ENCODE measurements at regions of chr9 and their contacts with region 1.

Region 1: DNA sequence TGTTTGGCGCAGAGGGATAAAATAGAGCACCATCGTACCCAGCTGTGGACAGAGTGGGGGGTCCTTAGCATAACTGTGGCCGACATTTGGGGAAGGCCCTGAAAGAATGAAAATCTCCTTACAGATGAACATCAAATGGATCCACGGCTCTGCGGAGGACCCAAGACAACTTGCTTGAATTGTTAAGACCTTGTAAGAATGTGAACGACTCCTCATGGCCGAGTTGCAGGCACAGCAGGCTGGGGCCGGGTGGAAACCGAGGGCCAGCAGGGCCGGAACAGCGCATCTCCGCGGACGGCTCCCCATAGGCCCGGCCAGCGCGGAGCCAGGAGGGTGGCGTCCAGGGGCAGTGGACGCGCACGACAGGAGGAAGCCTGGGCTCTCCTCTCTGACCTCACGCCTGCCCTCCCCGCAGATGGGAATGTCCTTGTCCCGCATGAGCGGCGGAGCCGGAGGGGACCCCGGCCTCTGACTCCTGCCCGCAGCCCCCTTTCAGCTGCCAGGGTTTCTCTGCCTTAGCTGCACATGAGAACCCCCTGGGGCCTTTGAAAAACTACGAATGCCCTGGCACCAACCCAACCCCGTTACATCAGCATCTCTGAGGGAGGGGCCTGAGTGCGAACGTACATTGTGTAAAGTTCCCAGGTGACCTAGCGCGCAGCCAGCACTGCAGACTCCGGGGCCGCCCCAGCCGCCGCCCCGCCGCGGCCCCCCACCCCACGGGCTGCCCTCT is 36.2 kb upstream of the PTCH1 start:
- DNase-seq: no peak
- H3K4me3 ChIP-seq: no peak overlapping the region
- H3K27ac ChIP-seq: no peak overlapping the region
- H3K4me1 ChIP-seq: no peaks in the 10 kb centered on the region
- H3K27me3 ChIP-seq: no peaks in the 10 kb centered on the region
- CTCF ChIP-seq: no peak
- EP300 ChIP-seq: no peak
- POLR2A ChIP-seq: no peak

Region 2: DNA sequence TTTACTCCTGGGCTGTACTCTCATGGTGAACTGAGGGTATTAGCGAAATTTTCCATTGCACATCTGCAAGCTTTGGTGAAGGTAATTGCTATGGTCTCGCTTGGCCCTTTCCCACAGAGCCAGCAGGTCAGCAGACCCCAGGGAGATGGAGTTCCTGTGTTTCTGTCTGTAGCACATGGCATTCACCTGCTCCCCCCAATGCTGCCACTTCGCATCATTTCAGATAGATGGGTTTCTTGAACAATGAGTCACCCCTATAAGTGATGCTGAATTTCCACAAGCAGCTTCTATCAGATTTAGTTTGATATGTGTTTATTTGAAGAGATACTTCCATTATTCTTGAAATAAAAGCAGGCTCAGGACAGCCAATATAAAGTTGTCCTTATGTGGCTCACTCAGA is 440.4 kb after region 1 on chr9:
- in situ Hi-C with region 1: no loop called
- intact Hi-C with region 1: no loop called
- DNase-seq: no peak
- H3K4me3 ChIP-seq: no peak overlapping the region
- H3K27ac ChIP-seq: no peak overlapping the region
- H3K4me1 ChIP-seq: no peaks in the 10 kb centered on the region
- H3K27me3 ChIP-seq: no peaks in the 10 kb centered on the region
- CTCF ChIP-seq: no peak
- EP300 ChIP-seq: no peak
- POLR2A ChIP-seq: no peak

Region 3: GRCh38 chr9:96245399-96245798 is 692.4 kb after region 1 on chr9:
- in situ Hi-C with region 1: no loop called
- intact Hi-C with region 1: loop called (anchors 5 kb)
- DNase-seq: no peak
- H3K4me3 ChIP-seq: no peak overlapping the region
- H3K27ac ChIP-seq: no peak overlapping the region
- H3K4me1 ChIP-seq: no peaks in the 10 kb centered on the region
- H3K27me3 ChIP-seq: no peaks in the 10 kb centered on the region
- CTCF ChIP-seq: no peak
- EP300 ChIP-seq: no peak
- POLR2A ChIP-seq: no peak

Measured in transverse colon (tissue), 4 donors.